Stomach (tissue), 19 donors: ENCODE measurements at regions of chr19 and their contacts with region 1.

Region 1: GRCh38 chr19:8355631-8356402 is 8.1 kb upstream of the ANGPTL4 start:
- DNase-seq: no peak
- H3K4me3 ChIP-seq: no peak overlapping the region
- H3K27ac ChIP-seq: peak overlapping the region; percentile 7 to 69 (median 57)
- H3K4me1 ChIP-seq: peaks cover 20 to 42% (median 34%) of the 10 kb centered on the region in 4 donors
- H3K27me3 ChIP-seq: peaks cover 0 to 15% (median 0%) of the 10 kb centered on the region in 3 donors
- CTCF ChIP-seq: no peak
- EP300 ChIP-seq: no peak
- POLR2A ChIP-seq: no peak

Region 2: GRCh38 chr19:8085598-8086408 is 270.0 kb before region 1 on chr19:
- intact Hi-C with region 1: no loop called
- DNase-seq: peak in 1 of 2 donors; percentile 76
- H3K4me3 ChIP-seq: no peak overlapping the region
- H3K27ac ChIP-seq: no peak overlapping the region
- H3K4me1 ChIP-seq: no peaks in the 10 kb centered on the region
- H3K27me3 ChIP-seq: peaks cover 0 to 27% (median 0%) of the 10 kb centered on the region in 3 donors
- CTCF ChIP-seq: no peak
- EP300 ChIP-seq: no peak
- POLR2A ChIP-seq: no peak

Region 3: DNA sequence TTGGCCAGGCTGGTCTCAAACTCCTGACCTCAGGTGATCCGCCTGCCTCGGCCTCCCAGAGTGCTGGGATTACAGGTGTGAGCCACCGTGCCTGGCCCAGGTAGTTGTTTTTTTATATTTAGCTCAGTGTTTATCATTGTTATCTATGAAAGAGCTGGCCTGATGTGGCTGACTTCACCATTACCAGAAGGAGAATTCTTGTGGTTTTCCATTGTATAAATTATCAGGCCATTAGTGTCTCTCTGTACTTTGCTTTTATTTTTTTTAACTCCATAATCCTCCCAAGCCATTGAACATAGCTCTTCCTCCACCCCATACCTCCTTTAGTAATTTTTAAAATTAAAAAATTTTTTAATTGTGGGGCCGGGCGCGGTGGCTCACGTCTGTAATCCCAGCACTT is 122.4 kb before region 1 on chr19:
- intact Hi-C with region 1: no loop called
- DNase-seq: no peak
- H3K4me3 ChIP-seq: no peak overlapping the region
- H3K27ac ChIP-seq: no peak overlapping the region
- H3K4me1 ChIP-seq: peaks cover 0 to 11% (median 2%) of the 10 kb centered on the region in 4 donors
- H3K27me3 ChIP-seq: no peaks in the 10 kb centered on the region
- CTCF ChIP-seq: no peak
- EP300 ChIP-seq: no peak
- POLR2A ChIP-seq: no peak

Region 4: DNA sequence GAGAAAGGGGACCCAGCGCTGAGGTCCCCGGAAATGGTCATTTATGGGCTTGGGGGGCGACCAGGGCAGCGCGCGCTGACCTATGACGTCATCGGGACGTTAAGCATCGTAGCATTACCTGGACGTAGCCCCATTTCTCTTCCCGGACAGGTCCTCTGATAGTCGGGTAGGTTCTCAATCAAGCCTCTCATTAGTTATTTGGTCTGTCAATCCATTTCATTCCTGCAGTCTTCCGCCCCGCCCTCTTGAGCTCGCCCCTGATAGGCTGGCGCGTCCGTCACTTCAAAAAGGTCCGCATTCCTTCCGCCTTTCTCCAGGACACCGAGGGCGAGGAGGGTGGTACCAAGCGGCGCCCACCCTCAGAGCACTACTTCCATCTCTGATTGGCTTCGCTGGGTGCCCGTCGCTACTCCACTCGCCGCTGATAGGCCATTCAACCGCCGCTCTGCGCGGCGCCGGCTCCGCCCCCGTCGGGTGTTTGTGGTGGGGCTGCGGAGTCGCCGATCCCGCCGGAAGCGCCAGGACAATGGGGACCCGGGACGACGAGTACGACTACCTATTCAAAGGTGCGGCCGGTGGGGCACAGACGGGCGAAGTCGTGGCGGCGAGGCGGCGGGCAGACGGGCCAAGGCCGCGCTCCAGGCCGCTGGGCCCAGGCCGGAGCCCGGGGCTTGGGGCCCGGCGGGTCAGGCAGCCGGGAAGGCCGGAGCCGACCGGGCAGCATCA is 34.2 kb after region 1 on chr19 and contains the start of gene RAB11B:
- intact Hi-C with region 1: loop called (anchors 5 kb)
- DNase-seq: peak; percentile 100
- H3K4me3 ChIP-seq: peak within 1 kb of the TSS; percentile 49 to 99 (median 84)
- H3K27ac ChIP-seq: peak within 1 kb of the TSS; percentile 96 to 100 (median 100)
- H3K4me1 ChIP-seq: peaks cover 58 to 79% (median 67%) of the 10 kb centered on the region in 4 donors
- H3K27me3 ChIP-seq: no peaks in the 10 kb centered on the region
- CTCF ChIP-seq: no peak
- EP300 ChIP-seq: no peak
- POLR2A ChIP-seq: peak in 1 of 4 donors; percentile 26
- total RNA-seq, gene RAB11B: 47.7 to 108 (median 79.9) TPM